ENCODE measurements at regions of chr6 and their contacts with region 1.

Region 1: GRCh38 chr6:118263921-118264486 is 284.1 kb upstream of the PLN start:
- DNase-seq: peak; percentile 41 to 59
- H3K4me3 ChIP-seq: no peak overlapping the region
- H3K4me1 ChIP-seq: no peaks in the 10 kb centered on the region
- H3K27me3 ChIP-seq: no peaks in the 10 kb centered on the region

Region 2: DNA sequence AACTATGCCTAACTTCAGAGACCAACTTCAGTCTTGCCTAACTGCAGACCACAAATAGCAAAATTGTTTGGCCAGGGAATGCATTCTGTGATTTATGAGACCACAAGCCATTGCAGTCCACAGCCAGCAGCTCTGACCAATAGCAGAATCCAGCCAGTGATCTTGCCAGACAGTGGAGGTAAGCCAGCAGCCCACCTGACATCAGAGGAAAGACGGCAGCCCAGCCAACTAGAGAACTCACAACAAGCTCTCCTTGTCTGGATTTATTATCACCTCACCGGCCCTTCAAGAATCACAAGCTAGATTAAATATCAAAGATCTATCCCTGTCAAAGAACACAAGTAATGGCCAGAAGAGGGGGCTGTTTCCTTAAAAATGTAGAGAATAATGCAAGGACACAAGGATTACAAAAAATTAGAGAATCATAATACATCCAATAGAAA is 423.4 kb before region 1 on chr6:
- in situ Hi-C with region 1: loop called (anchors 10 kb)
- DNase-seq: peak; percentile 45 to 69
- H3K4me3 ChIP-seq: no peak overlapping the region
- H3K4me1 ChIP-seq: peaks cover 16% of the 10 kb centered on the region
- H3K27me3 ChIP-seq: no peaks in the 10 kb centered on the region

Region 3: DNA sequence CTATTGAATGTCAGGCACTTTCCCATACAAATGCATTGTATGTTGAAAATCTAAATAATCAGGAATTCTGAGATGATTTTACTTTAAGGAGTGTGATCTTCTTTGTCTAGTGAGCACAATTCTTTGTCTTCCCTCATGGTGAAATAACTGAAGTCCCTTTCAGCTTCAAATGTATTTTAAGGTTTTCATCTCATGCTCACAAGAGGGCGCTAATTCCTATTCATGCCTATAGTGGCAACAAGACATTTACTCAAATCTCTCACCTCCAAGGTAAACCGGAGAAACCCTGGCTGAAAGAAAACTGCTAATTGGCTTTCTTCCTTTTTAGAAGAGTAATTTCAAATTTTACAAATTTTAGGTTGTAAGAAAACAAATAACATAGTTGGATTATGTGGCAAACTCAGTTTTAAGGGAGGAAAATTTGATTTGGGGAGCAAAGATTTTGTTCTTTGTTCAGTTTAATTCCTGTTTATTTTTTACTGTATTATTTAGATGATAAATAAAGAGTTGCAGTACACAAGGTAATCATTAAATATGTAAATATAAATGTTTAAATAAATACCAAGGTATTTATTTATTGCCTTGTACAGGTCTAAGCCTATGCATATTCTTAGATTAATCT is 287.9 kb before region 1 on chr6:
- in situ Hi-C with region 1: loop called (anchors 25 kb)
- DNase-seq: peak; percentile 42 to 66
- H3K4me3 ChIP-seq: no peak overlapping the region
- H3K4me1 ChIP-seq: no peaks in the 10 kb centered on the region
- H3K27me3 ChIP-seq: no peaks in the 10 kb centered on the region

Region 4: DNA sequence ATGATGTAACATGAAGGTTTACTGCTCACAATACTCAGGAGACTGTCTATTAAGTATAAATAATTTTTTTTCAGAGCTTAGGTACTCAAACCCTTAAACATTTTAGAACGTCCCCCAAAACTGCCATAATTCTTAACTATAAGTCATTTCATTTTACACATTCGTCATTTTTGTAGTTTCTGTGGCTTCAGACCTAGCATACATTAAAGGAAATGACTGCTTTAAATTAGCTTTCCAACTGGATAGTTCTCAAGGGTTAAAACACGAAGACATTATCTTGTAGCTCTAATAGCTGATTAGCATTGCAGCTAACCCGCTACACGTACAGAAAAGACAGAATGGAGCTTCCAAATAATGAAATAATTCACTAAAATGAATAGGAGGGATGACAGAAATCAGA is 259.2 kb after region 1 on chr6:
- in situ Hi-C with region 1: no loop called
- DNase-seq: no peak
- H3K4me3 ChIP-seq: no peak overlapping the region
- H3K4me1 ChIP-seq: no peaks in the 10 kb centered on the region
- H3K27me3 ChIP-seq: no peaks in the 10 kb centered on the region